Sciatic nerve (tissue), 2 donors: ENCODE measurements at regions of chr6 and their contacts with region 1.

Region 1: DNA sequence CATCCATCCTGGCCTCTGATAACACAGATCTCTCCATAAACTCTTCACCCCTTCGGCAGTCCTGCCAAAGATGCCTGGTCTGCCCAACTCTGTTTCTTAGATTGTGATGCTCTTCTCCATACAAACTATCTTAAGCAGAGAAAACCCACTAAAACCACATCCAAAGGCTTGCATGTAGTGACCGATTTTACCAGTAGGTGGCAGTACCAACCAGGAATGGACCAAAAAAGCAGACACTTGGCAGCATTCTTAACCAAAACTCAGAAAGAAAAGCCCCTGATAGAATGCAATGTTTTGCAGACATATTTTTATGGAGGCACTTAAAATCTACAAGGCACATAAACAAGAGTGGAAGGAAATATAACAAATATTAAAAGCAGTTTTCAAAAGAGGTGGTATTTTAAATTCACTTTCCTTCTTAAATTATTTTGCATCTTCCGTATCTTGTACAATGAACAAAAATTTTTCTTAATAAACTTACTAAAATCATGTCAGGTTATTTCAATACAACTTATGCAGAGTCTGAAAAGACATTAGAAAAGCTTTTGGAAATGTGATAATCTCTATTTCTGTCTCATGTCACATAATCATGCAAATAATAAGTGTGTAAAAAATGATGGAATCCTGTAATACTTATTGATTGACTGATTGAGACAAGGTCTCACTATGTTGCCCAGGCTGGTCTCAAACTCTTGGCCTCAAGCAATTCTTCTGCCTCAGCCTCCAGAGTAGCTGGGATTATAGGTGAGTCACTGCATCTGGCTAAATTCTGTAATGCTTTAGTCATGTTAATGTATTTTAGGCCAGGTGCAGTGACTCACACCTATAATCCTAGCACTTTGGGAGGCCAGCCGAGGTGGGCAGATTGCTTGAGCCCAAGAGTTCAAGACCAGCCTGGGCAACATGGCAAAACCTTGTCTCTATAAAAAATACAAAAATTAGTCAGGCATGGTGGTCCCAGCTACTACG is 29.4 kb downstream of the LRP11 start:
- DNase-seq: peak; percentile 74
- ATAC-seq: peak; percentile 55

Region 2: GRCh38 chr6:149852180-149852579 is 17.4 kb after region 1 on chr6:
- intact Hi-C with region 1: loop called (anchors 2 kb)
- DNase-seq: no peak
- ATAC-seq: no peak

Region 3: DNA sequence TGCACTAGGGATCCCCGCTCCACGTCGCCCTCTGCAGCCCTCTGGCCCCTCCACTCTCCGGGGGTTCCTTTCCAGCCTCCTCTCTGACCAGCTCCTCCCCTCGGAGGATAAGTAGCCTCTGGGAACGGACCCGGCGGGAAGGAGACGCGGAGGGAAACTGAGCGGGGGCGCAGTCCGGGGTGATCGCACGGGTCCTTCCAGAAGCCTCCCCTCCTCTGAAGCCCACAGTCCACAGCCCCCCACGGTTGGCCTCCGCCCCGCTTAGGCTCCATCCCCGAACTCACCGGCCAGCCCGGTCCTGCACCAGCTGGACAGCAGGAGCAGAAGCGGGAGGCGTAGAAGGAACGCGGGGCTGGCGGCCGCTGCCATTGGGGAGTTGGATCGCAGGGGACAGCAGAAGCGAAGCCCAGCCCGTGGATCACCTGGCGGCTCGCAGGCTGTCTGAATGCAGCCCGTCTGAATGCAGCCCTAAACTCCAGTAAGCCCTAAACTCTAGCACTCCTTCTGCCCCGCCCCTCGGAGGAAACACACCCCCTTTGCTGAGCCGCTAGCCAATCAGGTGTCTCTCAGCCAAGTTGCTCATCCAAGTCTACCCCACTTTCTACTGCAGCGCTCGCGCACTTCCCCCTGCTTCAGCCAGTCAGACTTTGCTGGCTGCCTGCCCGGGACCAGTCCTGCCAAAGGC is 88.0 kb after region 1 on chr6 and contains the start of gene RAET1G:
- intact Hi-C with region 1: loop called (anchors 5 kb)
- DNase-seq: peak; percentile 92
- ATAC-seq: peak; percentile 92
- total RNA-seq, gene RAET1G: 0.53 TPM